ENCODE measurements at regions of chr17 and their contacts with region 1.

Region 1: GRCh38 chr17:10875979-10876555 is 38.2 kb upstream of the PIRT start:
- DNase-seq: no peak
- ATAC-seq: no peak
- H3K4me3 ChIP-seq: no peak overlapping the region
- H3K27ac ChIP-seq: no peak overlapping the region
- H3K4me1 ChIP-seq: no peaks in the 10 kb centered on the region
- H3K27me3 ChIP-seq: peaks cover 0 to 1% of the 10 kb centered on the region in 2 donors

Region 2: DNA sequence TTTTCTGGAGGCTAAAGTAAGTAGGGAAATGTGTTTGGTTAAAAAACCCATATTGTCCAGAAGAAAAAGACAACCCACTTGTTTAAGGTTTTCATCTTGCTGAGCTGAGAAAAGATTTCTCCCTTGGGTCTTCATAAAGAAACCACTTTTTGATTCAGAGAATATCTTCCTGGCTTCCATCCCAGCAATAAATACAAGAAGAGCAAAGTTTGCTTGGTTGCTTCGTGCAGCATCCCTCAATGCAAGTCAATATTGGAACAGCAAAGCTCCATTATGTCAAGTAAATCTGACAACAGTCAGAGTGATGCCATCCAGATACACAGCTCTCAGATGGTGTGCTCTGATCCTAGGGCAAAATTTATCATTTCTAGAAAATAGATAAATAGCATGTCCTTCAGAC is 80.8 kb after region 1 on chr17:
- intact Hi-C with region 1: no loop called
- DNase-seq: no peak
- ATAC-seq: no peak
- H3K4me3 ChIP-seq: no peak overlapping the region
- H3K27ac ChIP-seq: no peak overlapping the region
- H3K4me1 ChIP-seq: no peaks in the 10 kb centered on the region
- H3K27me3 ChIP-seq: no peaks in the 10 kb centered on the region

Region 3: GRCh38 chr17:11986942-11987329 is 1110.9 kb after region 1 on chr17:
- intact Hi-C with region 1: loop called in 1 of 2 experiments (anchors 10 kb)
- DNase-seq: no peak
- ATAC-seq: peak; percentile 76
- H3K4me3 ChIP-seq: no peak overlapping the region
- H3K27ac ChIP-seq: no peak overlapping the region
- H3K4me1 ChIP-seq: no peaks in the 10 kb centered on the region
- H3K27me3 ChIP-seq: no peaks in the 10 kb centered on the region

Measured in aorta (tissue), 5 donors.